ENCODE measurements at regions of chr3 and their contacts with region 1.

Region 1: GRCh38 chr3:44685128-44685800 is 27.2 kb upstream of the ZNF502 start:
- DNase-seq: peak; percentile 57 to 72
- H3K4me3 ChIP-seq: peak overlapping the region; percentile 51
- H3K27ac ChIP-seq: no peak overlapping the region
- H3K4me1 ChIP-seq: no peaks in the 10 kb centered on the region
- H3K27me3 ChIP-seq: peaks cover 3% of the 10 kb centered on the region; the same call in 1 of the 2 replicates
- CTCF ChIP-seq: no peak

Region 2: DNA sequence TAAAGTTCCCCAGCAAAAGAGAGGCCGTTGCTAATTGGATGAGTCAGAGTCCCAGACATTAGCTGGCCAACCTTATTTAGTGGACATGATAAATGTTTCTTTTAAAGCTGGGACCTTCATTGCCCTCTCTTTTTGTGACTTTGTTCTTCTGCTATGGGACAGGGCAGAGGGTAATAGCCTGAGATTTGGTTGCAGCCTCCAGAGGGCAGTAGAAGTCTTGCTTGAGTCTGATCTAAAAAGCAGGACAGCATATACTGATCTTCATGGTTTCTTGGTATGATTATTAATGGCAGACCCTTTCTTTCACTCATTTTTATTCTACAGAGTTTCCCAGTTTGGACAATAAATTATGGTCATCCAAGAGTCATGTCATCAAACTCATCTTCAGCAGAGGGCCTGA is 155.3 kb before region 1 on chr3:
- CTCF ChIA-PET with region 1: no interaction called
- POLR2A ChIA-PET with region 1: no interaction called
- intact Hi-C with region 1: loop called (anchors 2 kb)
- DNase-seq: no peak
- H3K4me3 ChIP-seq: no peak overlapping the region
- H3K27ac ChIP-seq: no peak overlapping the region
- H3K4me1 ChIP-seq: no peaks in the 10 kb centered on the region
- H3K27me3 ChIP-seq: peaks cover 18% of the 10 kb centered on the region
- CTCF ChIP-seq: no peak; the same call in 1 of the 2 replicates

Region 3: DNA sequence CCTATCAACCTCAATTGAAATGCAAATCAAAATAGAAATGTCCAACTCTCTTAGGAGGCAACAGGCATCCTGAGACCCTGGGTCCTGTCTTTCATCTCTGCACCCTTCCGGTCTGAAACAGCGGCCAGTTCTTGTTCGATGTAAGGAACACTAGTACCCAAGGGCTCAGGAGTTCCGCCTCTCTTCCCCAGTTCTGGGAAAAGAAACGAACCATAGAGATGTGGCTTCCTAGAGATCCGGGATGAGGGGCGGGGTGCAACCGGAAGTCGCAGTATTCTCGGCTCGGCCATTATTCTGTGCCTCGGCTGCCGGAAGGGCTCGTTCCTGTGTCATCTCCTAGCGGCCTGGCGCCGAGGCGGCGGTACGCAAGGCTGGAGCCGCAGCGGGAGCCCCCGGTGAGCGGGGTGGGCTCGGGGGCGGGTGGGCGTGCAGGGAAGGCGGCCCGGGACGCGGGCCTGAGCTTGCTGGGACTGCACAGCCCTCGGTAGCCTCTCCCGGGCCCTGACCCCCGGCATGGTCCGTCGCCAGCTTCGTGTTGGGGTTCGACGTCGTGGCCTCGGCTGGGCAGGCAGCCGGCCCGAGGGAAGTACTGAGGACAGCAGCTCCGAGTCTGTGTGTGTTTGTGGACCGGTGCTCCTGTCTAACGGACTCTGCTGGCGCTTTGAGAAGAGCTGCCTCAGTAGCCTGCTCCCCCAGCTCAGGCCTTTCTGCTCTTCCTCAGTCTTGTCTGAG is 60.3 kb before region 1 on chr3 and contains the start of gene ZNF197:
- CTCF ChIA-PET with region 1: interaction called, 4 read pairs
- POLR2A ChIA-PET with region 1: no interaction called
- intact Hi-C with region 1: loop called (anchors 2 kb)
- DNase-seq: peak; percentile 67 to 74
- H3K4me3 ChIP-seq: peak within 1 kb of the TSS; percentile 65
- H3K27ac ChIP-seq: no peak within 1 kb of the TSS
- H3K4me1 ChIP-seq: no peaks in the 10 kb centered on the region; the same call in 1 of the 2 replicates
- H3K27me3 ChIP-seq: no peaks in the 10 kb centered on the region
- CTCF ChIP-seq: no peak
- total RNA-seq, gene ZNF197: 7.4 and 9.5 TPM in 2 replicates

Region 4: DNA sequence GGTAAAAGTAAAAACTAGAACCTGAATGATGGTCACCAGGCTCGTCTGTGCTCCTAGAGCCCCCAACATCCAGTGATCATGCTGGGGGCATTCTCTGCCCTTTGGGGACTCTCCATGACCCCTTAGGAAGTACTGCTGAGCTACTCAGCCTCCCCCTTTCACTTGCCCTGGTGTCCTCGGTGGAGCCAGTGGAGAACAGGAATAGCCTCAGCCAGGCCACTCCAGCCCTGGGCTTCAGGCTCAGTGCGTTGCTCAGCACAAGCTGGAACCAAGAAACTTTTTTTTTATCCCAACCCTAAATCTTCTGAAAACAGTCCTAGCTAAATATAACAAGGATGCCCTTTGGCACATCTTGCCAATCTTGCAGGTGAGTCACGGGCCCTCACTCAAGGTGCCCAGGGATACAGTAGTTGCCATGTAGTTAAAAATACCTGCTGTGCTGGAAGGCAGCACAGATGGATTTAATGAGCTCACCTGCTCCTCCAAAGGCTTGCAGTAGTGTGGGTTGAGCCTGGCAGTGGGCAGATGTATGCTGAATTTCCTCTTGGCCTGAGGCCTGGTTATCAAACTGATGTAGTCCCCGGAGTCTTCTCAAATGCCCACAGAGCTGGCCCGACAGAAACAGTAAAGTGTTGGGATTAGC is 587.7 kb after region 1 on chr3:
- CTCF ChIA-PET with region 1: no interaction called
- POLR2A ChIA-PET with region 1: no interaction called
- intact Hi-C with region 1: no loop called
- DNase-seq: peak; percentile 48 to 85
- H3K4me3 ChIP-seq: no peak overlapping the region
- H3K27ac ChIP-seq: peak overlapping the region; percentile 83
- H3K4me1 ChIP-seq: peaks cover 29% of the 10 kb centered on the region
- H3K27me3 ChIP-seq: no peaks in the 10 kb centered on the region
- CTCF ChIP-seq: no peak

Measured in PC-9 (cell line).